Brain microvascular endothelial cell (primary cell): ENCODE measurements at regions of chr15 and their contacts with region 1.

Region 1: DNA sequence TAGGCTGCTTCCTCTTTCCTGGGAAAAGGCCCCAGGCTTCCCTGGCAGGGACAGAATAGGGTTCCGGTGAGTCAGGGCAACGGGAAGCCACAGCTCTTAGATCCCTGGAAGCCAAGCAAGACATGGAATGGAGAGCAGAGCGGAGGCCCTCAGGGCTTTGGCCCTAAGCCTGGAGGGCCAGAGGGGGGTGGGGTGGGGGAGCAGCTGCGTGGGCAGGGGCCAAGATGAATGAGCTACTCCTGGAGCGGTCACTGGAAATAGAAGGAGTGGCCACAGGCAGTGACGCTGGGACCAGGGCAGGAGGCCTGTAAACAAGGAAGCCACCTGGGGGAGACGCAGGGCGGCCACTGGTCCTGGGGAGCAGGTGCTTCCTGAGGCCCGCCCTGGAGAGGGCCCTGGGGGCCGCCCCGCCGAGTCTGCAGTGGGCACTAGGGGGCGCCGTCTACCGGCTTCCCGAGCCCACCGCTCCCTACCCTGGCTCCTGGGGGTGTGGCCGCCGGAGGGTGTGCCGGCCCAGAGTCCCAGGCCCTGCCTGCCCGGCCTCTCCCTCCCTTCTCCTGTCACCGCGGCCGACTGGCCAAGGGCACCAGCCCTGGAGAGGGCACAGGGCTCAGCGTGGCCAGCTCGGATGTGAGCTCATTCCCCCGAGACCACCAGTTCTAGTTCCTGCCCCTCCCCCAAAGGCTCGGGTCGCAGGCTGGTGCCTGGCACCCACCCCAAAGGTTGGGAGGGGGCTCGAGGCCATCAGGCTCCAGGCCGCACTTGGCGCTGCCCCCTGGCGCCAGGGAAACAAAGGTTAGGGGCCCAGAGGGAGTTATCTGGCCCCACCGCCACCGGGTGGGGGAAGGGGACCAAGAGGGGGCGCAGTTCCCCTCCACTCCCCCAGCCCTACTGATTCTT is 12.1 kb downstream of the VPS18 start:
- DNase-seq: peak; percentile 62
- H3K4me3 ChIP-seq: peak overlapping the region; percentile 46
- H3K27ac ChIP-seq: peak overlapping the region; percentile 3
- H3K27me3 ChIP-seq: no peaks in the 10 kb centered on the region
- CTCF ChIP-seq: peak; percentile 78

Region 2: GRCh38 chr15:41022487-41023090 is 116.2 kb after region 1 on chr15:
- in situ Hi-C with region 1: loop called (anchors 25 kb)
- DNase-seq: peak; percentile 43
- H3K4me3 ChIP-seq: no peak overlapping the region
- H3K27ac ChIP-seq: no peak overlapping the region
- H3K27me3 ChIP-seq: no peaks in the 10 kb centered on the region
- CTCF ChIP-seq: peak; percentile 85

Region 3: DNA sequence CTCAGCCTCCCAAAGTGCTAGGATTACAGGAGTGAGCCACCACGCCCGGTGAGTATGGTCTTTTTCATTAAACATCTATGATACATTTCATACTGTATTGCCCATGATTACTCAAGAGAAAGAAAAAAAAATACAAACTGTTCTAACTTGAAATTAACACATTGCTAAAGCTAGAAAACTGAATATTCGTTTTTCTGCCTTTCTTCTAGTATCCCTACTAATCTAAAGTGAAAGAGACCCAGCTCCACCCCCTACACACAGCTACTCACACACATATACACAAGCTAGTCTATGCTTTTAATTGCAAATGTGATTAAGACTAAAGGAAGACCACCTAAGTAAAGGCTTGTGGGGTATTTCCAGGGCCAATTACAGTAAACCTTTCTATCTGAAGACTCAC is 166.7 kb after region 1 on chr15:
- in situ Hi-C with region 1: no loop called
- DNase-seq: no peak
- H3K4me3 ChIP-seq: no peak overlapping the region
- H3K27ac ChIP-seq: no peak overlapping the region
- H3K27me3 ChIP-seq: no peaks in the 10 kb centered on the region
- CTCF ChIP-seq: no peak

Region 4: GRCh38 chr15:41944313-41944940 is 1038.1 kb after region 1 on chr15:
- in situ Hi-C with region 1: no loop called
- DNase-seq: peak; percentile 88
- H3K4me3 ChIP-seq: no peak overlapping the region
- H3K27ac ChIP-seq: peak overlapping the region; percentile 79
- H3K27me3 ChIP-seq: no peaks in the 10 kb centered on the region
- CTCF ChIP-seq: no peak